CD8-positive, alpha-beta T cell (primary cell): ENCODE measurements at regions of chr15 and their contacts with region 1.

Region 1: DNA sequence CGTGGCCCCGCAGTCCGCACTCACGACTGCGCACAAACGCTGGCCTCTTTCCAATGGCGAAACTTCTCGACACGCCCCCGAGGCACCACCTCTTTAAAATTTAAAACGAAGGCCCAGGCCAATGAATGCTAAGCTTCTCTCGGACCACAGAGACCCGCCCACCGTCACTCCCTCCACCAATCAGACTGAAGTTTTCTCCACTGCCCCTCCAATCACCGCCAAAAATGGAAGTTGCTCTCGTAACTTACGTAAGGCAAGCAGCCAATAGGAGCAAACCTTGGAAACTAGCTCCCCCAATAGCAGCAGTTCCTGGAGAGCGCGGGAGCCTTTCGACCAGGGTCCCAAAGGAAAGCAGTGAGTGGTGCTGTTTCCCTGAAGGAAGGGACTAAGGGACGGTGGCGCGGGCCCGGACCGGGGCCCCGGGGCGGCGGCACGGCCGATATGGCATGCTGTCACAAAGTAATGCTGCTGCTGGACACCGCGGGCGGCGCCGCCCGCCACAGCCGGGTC is at the start of gene TICRR:
- DNase-seq: peak; percentile 88 to 99 (median 92)
- ATAC-seq: peak; percentile 98
- H3K4me3 ChIP-seq: peak within 1 kb of the TSS; percentile 58 to 86
- H3K4me3 Mint-ChIP-seq: peak within 1 kb of the TSS; percentile 82
- H3K27ac ChIP-seq: no peak within 1 kb of the TSS
- H3K27ac Mint-ChIP-seq: peak within 1 kb of the TSS; percentile 13
- H3K4me1 ChIP-seq: peaks cover 6% of the 10 kb centered on the region
- H3K4me1 Mint-ChIP-seq: peaks cover 11% of the 10 kb centered on the region
- H3K27me3 ChIP-seq: no peaks in the 10 kb centered on the region
- H3K27me3 Mint-ChIP-seq: peaks cover 11% of the 10 kb centered on the region
- CTCF ChIP-seq: no peak
- total RNA-seq, gene TICRR: 0.11 TPM in 1 of 2 experiments, not detected in the other

Region 2: DNA sequence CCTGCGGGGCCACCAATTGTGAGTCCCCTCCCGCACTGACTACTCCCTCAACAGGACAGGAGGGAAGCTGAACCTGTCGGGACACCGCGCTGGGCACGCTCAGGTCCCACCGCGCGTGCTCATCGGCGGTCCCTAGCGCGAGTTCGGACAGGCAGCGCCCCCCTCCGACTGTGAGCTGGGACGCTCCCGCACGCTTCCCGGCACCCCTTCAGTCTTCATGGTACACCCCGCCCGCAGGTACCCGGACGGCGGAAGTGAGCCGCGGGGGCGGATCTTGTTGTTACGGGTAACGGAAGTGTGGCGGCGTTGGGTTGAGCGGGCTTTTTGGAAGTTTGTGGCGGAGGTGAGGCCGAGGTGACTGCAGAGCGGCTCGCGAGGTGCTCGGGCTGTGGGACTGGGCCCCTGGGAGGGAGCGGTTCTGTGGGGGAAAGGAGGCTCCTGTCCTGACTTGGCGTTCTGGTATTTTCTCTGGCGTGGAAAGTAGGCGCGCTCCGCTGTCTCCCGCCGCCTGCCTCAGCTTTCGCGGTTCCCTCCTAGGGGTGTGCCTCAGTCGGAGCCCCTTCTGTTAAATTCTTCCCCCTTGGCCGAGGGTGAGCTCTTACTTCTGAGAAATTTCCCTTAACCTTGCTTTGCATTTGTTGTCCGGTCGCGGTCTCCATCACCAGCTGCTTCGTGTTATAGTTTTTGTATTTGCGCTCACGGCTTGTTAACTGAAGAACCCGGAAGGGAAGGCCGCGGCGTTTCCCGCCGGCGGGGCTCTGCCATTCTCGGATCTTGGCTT is 331.3 kb before region 1 on chr15 and contains the start of gene FANCI:
- CTCF ChIA-PET with region 1: no interaction called
- POLR2A ChIA-PET with region 1: no interaction called
- intact Hi-C with region 1: loop called in 1 of 2 experiments (anchors 10 kb)
- DNase-seq: peak; percentile 93 to 98 (median 97)
- ATAC-seq: peak; percentile 98
- H3K4me3 ChIP-seq: peak within 1 kb of the TSS; percentile 77 to 85
- H3K4me3 Mint-ChIP-seq: peak within 1 kb of the TSS; percentile 95
- H3K27ac ChIP-seq: peak within 1 kb of the TSS; percentile 24 to 52
- H3K27ac Mint-ChIP-seq: peak within 1 kb of the TSS; percentile 90
- H3K4me1 ChIP-seq: peaks cover 15% of the 10 kb centered on the region
- H3K4me1 Mint-ChIP-seq: peaks cover 25% of the 10 kb centered on the region
- H3K27me3 ChIP-seq: no peaks in the 10 kb centered on the region
- H3K27me3 Mint-ChIP-seq: no peaks in the 10 kb centered on the region
- CTCF ChIP-seq: no peak
- total RNA-seq, gene FANCI: 5.1 to 6.3 TPM

Region 3: GRCh38 chr15:89647191-89647851 is 72.1 kb after region 1 on chr15:
- CTCF ChIA-PET with region 1: no interaction called
- POLR2A ChIA-PET with region 1: no interaction called
- intact Hi-C with region 1: no loop called
- DNase-seq: peak in 8 of 9 experiments; percentile 22 to 70 (median 55)
- ATAC-seq: peak; percentile 34
- H3K4me3 ChIP-seq: no peak overlapping the region
- H3K4me3 Mint-ChIP-seq: no peak overlapping the region
- H3K27ac ChIP-seq: no peak overlapping the region
- H3K27ac Mint-ChIP-seq: no peak overlapping the region
- H3K4me1 ChIP-seq: no peaks in the 10 kb centered on the region
- H3K4me1 Mint-ChIP-seq: peaks cover 2% of the 10 kb centered on the region
- H3K27me3 ChIP-seq: no peaks in the 10 kb centered on the region
- H3K27me3 Mint-ChIP-seq: peaks cover 4% of the 10 kb centered on the region
- CTCF ChIP-seq: peak; percentile 63

Region 4: DNA sequence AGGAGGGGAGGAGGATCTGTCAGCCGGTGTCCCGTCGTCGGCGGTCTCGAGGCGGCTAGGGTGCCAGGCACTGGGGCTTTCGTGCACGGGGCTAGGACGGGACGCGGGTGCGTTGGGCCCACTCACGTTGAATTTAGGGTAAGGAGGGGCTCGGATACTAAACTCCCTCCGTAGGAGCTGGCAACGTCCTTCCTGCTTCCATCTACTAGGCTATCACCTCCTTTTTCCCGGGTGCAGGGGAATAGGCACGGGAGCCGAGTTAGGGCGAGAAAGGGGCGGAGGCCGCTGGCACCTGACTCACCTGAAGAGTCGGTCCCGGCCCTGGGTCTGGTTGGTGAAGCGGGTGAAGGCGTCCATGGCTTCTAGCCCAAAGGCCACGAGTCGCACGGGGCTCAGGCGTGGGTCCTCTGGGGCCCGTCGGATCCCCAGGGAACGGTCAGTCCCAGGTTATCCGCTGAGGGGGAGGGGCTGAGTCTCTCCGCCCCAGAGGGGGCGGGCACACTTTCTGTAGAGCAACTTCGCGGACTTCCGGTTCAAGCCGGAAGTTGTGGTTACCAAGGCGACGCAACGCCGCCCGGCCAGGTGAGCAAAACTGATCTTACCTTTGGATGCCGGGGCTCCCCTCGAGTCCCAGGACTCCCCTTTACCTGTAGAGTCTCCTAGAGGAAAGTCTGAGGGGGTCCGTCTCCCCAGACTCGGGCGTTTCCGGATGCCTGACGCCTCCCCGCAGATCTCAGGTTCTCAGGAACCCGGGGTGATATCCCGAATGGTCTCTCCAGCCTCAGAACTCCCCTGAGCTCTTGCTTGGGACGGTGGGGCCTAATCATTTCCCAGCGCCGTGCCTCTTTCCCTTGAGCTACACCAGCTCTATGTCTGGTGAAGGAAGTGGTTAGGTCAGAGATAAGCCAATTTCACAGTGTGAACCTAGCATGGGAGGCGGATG is 115.3 kb after region 1 on chr15 and contains the starts of genes PEX11A and WDR93:
- CTCF ChIA-PET with region 1: no interaction called
- POLR2A ChIA-PET with region 1: no interaction called
- intact Hi-C with region 1: loop called in 1 of 2 experiments (anchors 1 kb)
- DNase-seq: peak; percentile 46 to 86 (median 73)
- ATAC-seq: peak; percentile 84
- H3K4me3 ChIP-seq: peak within 1 kb of the TSS; percentile 77 to 84
- H3K4me3 Mint-ChIP-seq: peak within 1 kb of the TSS; percentile 88
- H3K27ac ChIP-seq: peak within 1 kb of the TSS; percentile 19 to 57
- H3K27ac Mint-ChIP-seq: peak within 1 kb of the TSS; percentile 82
- H3K4me1 ChIP-seq: peaks cover 7% of the 10 kb centered on the region
- H3K4me1 Mint-ChIP-seq: peaks cover 12% of the 10 kb centered on the region
- H3K27me3 ChIP-seq: no peaks in the 10 kb centered on the region
- H3K27me3 Mint-ChIP-seq: no peaks in the 10 kb centered on the region
- CTCF ChIP-seq: no peak
- total RNA-seq, gene PEX11A: not detected
- total RNA-seq, gene WDR93: not detected